Activated CD4-positive, alpha-beta T cell treated with anti-CD3 and anti-CD28 coated beads for 36 hours (primary cell): ENCODE measurements at regions of chr16 and their contacts with region 1.

Region 1: GRCh38 chr16:30657866-30658730 is at the start of gene FBRS:
- DNase-seq: peak; percentile 100
- ATAC-seq: peak; percentile 79
- H3K4me3 Mint-ChIP-seq: peak within 1 kb of the TSS; percentile 89
- H3K27ac Mint-ChIP-seq: peak within 1 kb of the TSS; percentile 99
- H3K4me1 Mint-ChIP-seq: peaks cover 41% of the 10 kb centered on the region
- H3K27me3 Mint-ChIP-seq: no peaks in the 10 kb centered on the region
- total RNA-seq, gene FBRS: 84.7 to 111 TPM

Region 2: DNA sequence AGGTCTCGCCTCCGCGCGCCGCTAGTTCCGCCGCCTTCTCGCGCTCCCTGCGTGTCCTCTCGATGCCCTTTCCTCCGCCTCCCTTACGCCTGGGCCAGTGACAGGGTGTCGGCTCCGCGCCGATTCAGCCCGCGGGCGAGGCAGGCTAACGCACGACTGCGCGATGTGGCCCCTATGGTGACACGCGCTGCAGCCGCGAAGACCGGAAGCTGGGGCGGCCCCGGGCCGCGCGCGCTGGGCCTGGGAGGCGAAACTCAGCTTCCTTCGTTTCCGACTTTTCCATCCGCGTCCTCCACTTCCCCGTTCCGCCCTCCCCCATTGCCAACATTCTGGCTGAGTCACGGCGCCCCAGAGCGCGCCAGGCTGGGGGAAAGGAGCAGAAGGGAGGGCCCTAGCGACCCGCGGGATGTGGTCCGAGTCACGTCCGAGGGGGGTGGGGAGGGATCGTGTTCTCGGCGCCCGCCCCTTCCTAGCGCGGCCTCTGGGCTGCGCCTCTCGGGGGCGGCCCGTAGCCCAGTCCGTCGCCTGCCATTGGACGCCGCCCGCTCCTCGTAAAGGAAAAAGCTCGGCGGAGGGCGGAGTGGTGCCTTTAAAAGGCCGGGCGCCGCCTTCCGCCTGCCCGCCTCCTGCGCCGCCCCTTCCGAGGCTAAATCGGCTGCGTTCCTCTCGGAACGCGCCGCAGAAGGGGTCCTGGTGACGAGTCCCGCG is 592.8 kb before region 1 on chr16 and contains the start of gene ALDOA:
- CTCF ChIA-PET with region 1: no interaction called
- POLR2A ChIA-PET with region 1: interaction called, 5 read pairs
- intact Hi-C with region 1: loop called in 1 of 2 experiments (anchors 2 kb)
- DNase-seq: peak; percentile 99
- ATAC-seq: peak; percentile 87
- H3K4me3 Mint-ChIP-seq: peak within 1 kb of the TSS; percentile 88
- H3K27ac Mint-ChIP-seq: peak within 1 kb of the TSS; percentile 99
- H3K4me1 Mint-ChIP-seq: peaks cover 31% of the 10 kb centered on the region
- H3K27me3 Mint-ChIP-seq: no peaks in the 10 kb centered on the region
- total RNA-seq, gene ALDOA: 2,482 to 3,644 TPM

Region 3: GRCh38 chr16:30429678-30430427 is 228.2 kb before region 1 on chr16 and contains the start of gene DCTPP1:
- CTCF ChIA-PET with region 1: interaction called, 4 read pairs
- POLR2A ChIA-PET with region 1: interaction called, 6 read pairs
- intact Hi-C with region 1: loop called (anchors 1 to 2 kb)
- DNase-seq: peak; percentile 97
- ATAC-seq: peak; percentile 96
- H3K4me3 Mint-ChIP-seq: no peak within 1 kb of the TSS
- H3K27ac Mint-ChIP-seq: no peak within 1 kb of the TSS
- H3K4me1 Mint-ChIP-seq: peaks cover 31% of the 10 kb centered on the region
- H3K27me3 Mint-ChIP-seq: no peaks in the 10 kb centered on the region
- total RNA-seq, gene DCTPP1: 89.3 to 102 TPM

Region 4: DNA sequence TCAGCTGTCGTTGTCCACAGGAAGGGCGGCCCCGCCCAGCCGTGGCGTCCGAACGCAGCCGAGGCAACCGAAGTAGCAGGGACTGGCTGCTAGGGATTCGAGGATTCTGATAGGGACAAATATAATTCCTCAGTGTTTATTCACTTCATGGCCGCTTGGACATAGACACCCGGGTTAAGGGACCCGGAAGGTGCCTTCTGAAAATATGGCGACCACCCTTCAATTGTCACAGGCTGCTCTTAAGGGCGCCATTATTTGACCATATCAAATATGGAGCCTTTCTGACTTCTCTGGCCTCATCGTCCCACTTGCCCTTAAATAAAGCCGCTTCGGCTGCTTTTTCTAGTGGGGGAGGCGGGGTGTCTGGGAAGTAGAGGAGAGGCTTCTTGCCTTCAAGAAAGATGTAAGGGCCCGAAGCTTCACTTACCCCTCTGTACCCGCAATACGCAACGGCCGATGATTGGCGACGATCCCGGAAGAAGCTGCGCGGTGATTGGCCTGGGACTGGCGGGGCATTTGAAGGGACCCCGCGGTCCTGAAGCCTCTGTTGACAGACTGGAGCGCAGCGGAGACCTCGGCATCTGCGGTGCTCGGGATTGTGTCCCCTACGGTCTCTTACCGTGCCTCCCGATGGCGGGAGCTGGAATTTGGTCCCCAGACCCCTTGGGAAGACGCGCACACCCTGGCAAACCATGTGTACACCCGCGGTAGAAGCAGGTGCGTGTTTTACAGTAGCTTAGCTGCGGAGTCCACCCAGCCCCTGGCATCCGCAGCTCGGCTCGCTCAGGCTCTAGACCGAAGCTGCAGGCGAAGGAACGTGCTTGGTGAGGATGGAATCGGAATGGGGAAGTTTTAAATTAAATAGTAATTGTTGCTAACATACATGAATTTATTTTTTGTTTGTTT is 86.2 kb before region 1 on chr16 and contains the start of gene ZNF688:
- CTCF ChIA-PET with region 1: no interaction called
- POLR2A ChIA-PET with region 1: no interaction called
- intact Hi-C with region 1: loop called in 1 of 2 experiments (anchors 5 kb)
- DNase-seq: peak; percentile 95
- ATAC-seq: peak; percentile 79
- H3K4me3 Mint-ChIP-seq: peak within 1 kb of the TSS; percentile 87
- H3K27ac Mint-ChIP-seq: peak within 1 kb of the TSS; percentile 93
- H3K4me1 Mint-ChIP-seq: peaks cover 57% of the 10 kb centered on the region
- H3K27me3 Mint-ChIP-seq: no peaks in the 10 kb centered on the region
- total RNA-seq, gene ZNF688: 7.1 to 9.1 TPM

Region 5: GRCh38 chr16:30698139-30698815 is 40.2 kb after region 1 on chr16:
- CTCF ChIA-PET with region 1: interaction called, 35 read pairs
- POLR2A ChIA-PET with region 1: interaction called, 10 read pairs
- intact Hi-C with region 1: loop called (anchors 1 kb)
- DNase-seq: peak; percentile 100
- ATAC-seq: peak; percentile 75
- H3K4me3 Mint-ChIP-seq: peak overlapping the region; percentile 96
- H3K27ac Mint-ChIP-seq: peak overlapping the region; percentile 99
- H3K4me1 Mint-ChIP-seq: peaks cover 33% of the 10 kb centered on the region
- H3K27me3 Mint-ChIP-seq: no peaks in the 10 kb centered on the region

Region 6: GRCh38 chr16:30922960-30923535 is 264.9 kb after region 1 on chr16:
- CTCF ChIA-PET with region 1: no interaction called
- POLR2A ChIA-PET with region 1: no interaction called
- intact Hi-C with region 1: loop called (anchors 1 kb)
- DNase-seq: peak; percentile 98
- ATAC-seq: peak; percentile 76
- H3K4me3 Mint-ChIP-seq: peak overlapping the region; percentile 88
- H3K27ac Mint-ChIP-seq: peak overlapping the region; percentile 100
- H3K4me1 Mint-ChIP-seq: peaks cover 20% of the 10 kb centered on the region
- H3K27me3 Mint-ChIP-seq: no peaks in the 10 kb centered on the region